Ascending aorta (tissue), 2 donors: ENCODE measurements at regions of chr3 and their contacts with region 1.

Region 1: DNA sequence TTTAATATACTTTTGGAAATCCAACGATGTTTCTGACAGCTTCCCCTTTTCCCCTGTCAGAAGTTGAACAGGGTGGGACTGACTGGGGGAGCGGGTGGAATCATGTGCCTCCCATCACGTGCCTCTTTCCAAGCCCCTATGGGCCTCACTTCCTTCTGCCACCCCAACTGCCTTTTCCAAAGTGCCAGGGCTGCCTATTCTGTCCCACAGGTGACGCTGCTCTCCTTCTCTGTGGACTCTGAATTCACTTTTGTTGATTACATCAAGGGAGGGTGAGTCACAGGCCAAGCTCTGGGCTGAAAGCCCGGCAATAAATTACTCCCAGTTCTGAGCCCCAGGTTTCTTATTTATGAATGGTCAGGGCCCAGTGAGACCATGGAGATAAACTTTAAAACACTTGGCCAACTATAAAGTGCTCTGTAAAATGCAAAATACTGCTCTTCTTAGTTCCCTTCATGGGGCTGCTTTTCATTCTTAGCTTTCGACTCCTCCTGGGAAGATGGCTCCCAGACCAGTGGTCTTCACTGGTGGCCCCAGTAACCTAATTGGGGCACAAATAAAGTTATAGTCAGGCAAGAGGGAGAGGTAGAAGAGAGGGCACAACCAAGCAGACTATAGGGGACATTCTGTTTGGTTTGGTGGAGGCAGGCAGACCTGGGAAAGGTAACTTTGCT is 12.3 kb downstream of the CPNE9 start:
- DNase-seq: peak; percentile 66 to 93
- H3K4me3 ChIP-seq: no peak overlapping the region
- H3K27ac ChIP-seq: peak overlapping the region; percentile 73 to 86
- H3K4me1 ChIP-seq: peaks cover 3 to 4% of the 10 kb centered on the region in 2 donors
- H3K27me3 ChIP-seq: no peaks in the 10 kb centered on the region
- CTCF ChIP-seq: peak; percentile 85 to 89 (median 87)

Region 2: GRCh38 chr3:9749645-9750555 is 34.0 kb after region 1 on chr3 and contains the start of gene OGG1:
- intact Hi-C with region 1: loop called (anchors 2 kb)
- DNase-seq: peak; percentile 92 to 99
- H3K4me3 ChIP-seq: peak within 1 kb of the TSS; percentile 67 to 70
- H3K27ac ChIP-seq: peak within 1 kb of the TSS; percentile 76 to 84
- H3K4me1 ChIP-seq: peaks cover 4 to 14% of the 10 kb centered on the region in 2 donors
- H3K27me3 ChIP-seq: no peaks in the 10 kb centered on the region
- CTCF ChIP-seq: no peak
- total RNA-seq, gene OGG1: 36.0 TPM

Region 3: DNA sequence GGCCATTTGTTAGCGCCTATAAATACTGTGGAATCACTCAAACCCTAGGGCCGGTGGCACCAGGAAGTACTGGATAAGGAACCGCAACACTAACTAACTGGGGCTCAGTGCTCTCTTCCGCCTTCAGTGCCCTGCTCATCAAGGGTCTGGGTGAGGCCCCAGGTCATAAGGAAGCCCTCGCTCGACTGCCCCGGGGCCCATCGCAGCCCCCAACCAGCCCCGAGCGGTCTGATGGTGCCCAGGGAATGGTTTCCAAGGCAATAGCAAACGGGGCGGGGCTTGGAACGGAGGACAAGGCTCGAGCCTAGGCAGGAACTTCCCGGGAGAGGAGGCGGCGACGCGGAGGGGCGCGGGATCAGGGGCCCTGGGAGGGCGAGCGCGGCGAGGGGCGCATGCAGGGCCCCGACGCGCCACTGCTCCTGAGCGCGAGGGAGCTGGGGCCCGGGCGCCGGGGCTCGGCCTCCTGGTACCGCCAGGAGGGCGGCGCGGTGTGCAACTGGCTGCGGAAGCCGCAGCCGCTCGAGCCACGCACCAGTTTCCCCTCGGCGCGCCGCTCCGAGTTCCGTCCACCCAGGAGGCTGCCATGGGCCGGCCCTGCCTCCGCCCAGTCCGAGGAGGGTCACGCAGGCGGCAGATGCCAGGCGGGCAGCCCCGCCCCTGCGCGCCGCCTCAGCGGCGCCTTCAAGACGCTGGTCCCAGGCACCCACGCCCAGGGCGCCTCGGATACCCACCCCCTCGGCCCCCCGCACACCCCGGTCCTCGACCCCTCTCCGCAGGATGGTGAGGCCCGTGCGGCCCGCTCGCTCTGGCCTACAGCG is 93.9 kb after region 1 on chr3 and contains the start of gene TTLL3:
- intact Hi-C with region 1: loop called (anchors 1 kb)
- DNase-seq: peak in 1 of 2 donors; percentile 90
- H3K4me3 ChIP-seq: peak within 1 kb of the TSS; percentile 71 to 80
- H3K27ac ChIP-seq: peak within 1 kb of the TSS; percentile 94 to 95
- H3K4me1 ChIP-seq: peaks cover 5 to 10% of the 10 kb centered on the region in 2 donors
- H3K27me3 ChIP-seq: no peaks in the 10 kb centered on the region
- CTCF ChIP-seq: no peak
- total RNA-seq, gene TTLL3: 47.0 TPM

Region 4: GRCh38 chr3:9915254-9916141 is 199.6 kb after region 1 on chr3:
- intact Hi-C with region 1: loop called (anchors 5 kb)
- DNase-seq: peak in 1 of 2 donors; percentile 85
- H3K4me3 ChIP-seq: peak overlapping the region; percentile 62 to 89
- H3K27ac ChIP-seq: peak overlapping the region; percentile 79 to 86
- H3K4me1 ChIP-seq: peaks cover 22 to 32% of the 10 kb centered on the region in 2 donors
- H3K27me3 ChIP-seq: no peaks in the 10 kb centered on the region
- CTCF ChIP-seq: peak in 2 of 3 experiments; percentile 32 to 56

Region 5: GRCh38 chr3:10026084-10026890 is 310.4 kb after region 1 on chr3 and contains the start of gene FANCD2:
- intact Hi-C with region 1: loop called (anchors 5 kb)
- DNase-seq: peak; percentile 56 to 93
- H3K4me3 ChIP-seq: peak within 1 kb of the TSS; percentile 72 to 83
- H3K27ac ChIP-seq: peak within 1 kb of the TSS; percentile 59 to 62
- H3K4me1 ChIP-seq: peaks cover 7 to 22% of the 10 kb centered on the region in 2 donors
- H3K27me3 ChIP-seq: no peaks in the 10 kb centered on the region
- CTCF ChIP-seq: no peak
- total RNA-seq, gene FANCD2: 54.6 TPM

Region 6: DNA sequence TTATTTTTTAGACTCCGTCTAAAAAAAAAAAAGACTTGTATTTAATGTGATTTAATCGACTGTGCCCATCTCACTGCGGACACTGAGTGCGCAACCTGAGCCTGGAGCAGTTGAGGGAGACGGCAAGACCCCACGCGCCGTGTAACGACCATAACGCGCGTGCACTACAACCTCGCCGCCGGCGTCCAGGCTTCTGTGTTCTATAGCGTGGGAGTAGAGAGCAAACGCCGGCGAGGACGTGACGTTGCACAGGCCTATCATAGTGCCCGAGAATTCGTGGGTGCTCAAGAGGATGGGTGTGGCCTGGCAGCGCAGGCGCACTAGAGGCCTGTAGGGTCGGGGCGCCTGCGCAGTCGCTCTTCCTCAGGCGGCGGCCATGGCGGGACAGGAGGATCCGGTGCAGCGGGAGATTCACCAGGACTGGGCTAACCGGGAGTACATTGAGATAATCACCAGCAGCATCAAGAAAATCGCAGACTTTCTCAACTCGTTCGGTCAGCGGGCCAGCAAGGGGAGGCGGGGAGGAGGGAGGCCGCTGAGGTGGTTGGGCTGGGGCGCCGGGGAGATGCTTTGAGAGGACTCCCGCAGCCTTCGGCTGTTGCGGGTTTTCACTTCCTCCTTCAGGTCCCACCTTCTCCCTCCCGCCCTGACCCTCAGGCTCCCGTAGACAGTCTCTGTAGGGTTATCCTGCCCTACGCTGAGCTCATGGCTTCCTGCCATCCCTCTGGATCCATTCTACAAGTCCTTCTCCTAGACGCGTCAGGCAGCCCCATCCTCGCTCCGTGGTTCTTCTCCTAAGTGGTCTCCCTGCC is 399.6 kb after region 1 on chr3 and contains the start of gene BRK1:
- intact Hi-C with region 1: loop called (anchors 10 kb)
- DNase-seq: peak; percentile 87 to 98
- H3K4me3 ChIP-seq: peak within 1 kb of the TSS; percentile 75 to 76
- H3K27ac ChIP-seq: peak within 1 kb of the TSS; percentile 55 to 74
- H3K4me1 ChIP-seq: peaks cover 6 to 11% of the 10 kb centered on the region in 2 donors
- H3K27me3 ChIP-seq: no peaks in the 10 kb centered on the region
- CTCF ChIP-seq: no peak
- total RNA-seq, gene BRK1: 87.3 TPM